ENCODE measurements at regions of chr20 and their contacts with region 1.

Region 1: GRCh38 chr20:50744143-50744792 is 12.9 kb downstream of the PARD6B start:
- DNase-seq: peak; percentile 73 to 82
- H3K4me3 ChIP-seq: no peak overlapping the region
- H3K27ac ChIP-seq: peak overlapping the region; percentile 78 to 84
- H3K4me1 ChIP-seq: peaks cover 0 to 20% (median 8%) of the 10 kb centered on the region in 4 donors
- H3K27me3 ChIP-seq: no peaks in the 10 kb centered on the region
- CTCF ChIP-seq: peak; percentile 27 to 48

Region 2: DNA sequence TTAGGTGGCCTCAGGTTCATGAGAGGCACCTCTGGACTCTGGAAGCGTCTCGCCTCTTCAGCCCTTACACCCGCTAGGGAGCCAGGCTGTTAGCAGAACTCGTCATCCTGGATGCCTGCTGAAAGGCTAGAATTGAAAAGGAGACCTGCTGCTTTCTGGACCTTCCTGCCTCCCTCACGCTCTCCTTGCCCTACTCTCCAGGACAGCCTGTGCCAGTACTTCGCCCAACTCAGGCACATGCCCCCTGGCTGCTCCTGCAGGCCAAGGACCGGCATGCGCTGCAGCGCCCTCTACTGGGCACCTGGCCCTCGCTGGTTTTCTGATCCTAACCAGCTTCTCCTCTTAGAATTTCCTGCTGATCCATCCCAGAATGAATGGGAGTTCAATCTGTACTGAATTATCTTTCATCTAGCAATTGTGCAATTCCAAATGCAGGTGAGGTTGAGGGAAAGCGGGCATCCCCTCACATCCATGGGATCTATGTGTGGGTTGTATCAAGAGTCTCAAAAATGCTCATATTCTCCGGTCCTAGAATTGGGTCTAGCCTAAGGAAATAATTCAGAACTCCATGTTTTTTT is 156.1 kb before region 1 on chr20:
- intact Hi-C with region 1: loop called (anchors 5 kb)
- DNase-seq: peak; percentile 51 to 85
- H3K4me3 ChIP-seq: no peak overlapping the region
- H3K27ac ChIP-seq: no peak overlapping the region
- H3K4me1 ChIP-seq: peaks cover 0 to 21% (median 7%) of the 10 kb centered on the region in 4 donors
- H3K27me3 ChIP-seq: no peaks in the 10 kb centered on the region
- CTCF ChIP-seq: peak; percentile 79 to 87

Region 3: GRCh38 chr20:50625986-50626677 is 118.1 kb before region 1 on chr20:
- intact Hi-C with region 1: loop called (anchors 5 kb)
- DNase-seq: peak; percentile 71 to 81
- H3K4me3 ChIP-seq: no peak overlapping the region
- H3K27ac ChIP-seq: no peak overlapping the region
- H3K4me1 ChIP-seq: peaks cover 0 to 7% (median 4%) of the 10 kb centered on the region in 4 donors
- H3K27me3 ChIP-seq: no peaks in the 10 kb centered on the region
- CTCF ChIP-seq: peak; percentile 45 to 53

Region 4: GRCh38 chr20:50680412-50680908 is 63.8 kb before region 1 on chr20:
- intact Hi-C with region 1: no loop called
- DNase-seq: peak in 1 of 2 donors; percentile 64
- H3K4me3 ChIP-seq: no peak overlapping the region
- H3K27ac ChIP-seq: no peak overlapping the region
- H3K4me1 ChIP-seq: no peaks in the 10 kb centered on the region
- H3K27me3 ChIP-seq: peaks cover 0 to 9% of the 10 kb centered on the region in 2 donors
- CTCF ChIP-seq: no peak

Measured in tibial artery (tissue), 4 donors.